ENCODE measurements at regions of chr6 and their contacts with region 1.

Region 1: GRCh38 chr6:151323791-151324487 is 67.4 kb downstream of the ZBTB2 start:
- DNase-seq: peak; percentile 80
- H3K4me3 Mint-ChIP-seq: no peak overlapping the region
- H3K27ac Mint-ChIP-seq: no peak overlapping the region
- H3K4me1 Mint-ChIP-seq: peaks cover 26% of the 10 kb centered on the region
- H3K27me3 Mint-ChIP-seq: peaks cover 72% of the 10 kb centered on the region

Region 2: DNA sequence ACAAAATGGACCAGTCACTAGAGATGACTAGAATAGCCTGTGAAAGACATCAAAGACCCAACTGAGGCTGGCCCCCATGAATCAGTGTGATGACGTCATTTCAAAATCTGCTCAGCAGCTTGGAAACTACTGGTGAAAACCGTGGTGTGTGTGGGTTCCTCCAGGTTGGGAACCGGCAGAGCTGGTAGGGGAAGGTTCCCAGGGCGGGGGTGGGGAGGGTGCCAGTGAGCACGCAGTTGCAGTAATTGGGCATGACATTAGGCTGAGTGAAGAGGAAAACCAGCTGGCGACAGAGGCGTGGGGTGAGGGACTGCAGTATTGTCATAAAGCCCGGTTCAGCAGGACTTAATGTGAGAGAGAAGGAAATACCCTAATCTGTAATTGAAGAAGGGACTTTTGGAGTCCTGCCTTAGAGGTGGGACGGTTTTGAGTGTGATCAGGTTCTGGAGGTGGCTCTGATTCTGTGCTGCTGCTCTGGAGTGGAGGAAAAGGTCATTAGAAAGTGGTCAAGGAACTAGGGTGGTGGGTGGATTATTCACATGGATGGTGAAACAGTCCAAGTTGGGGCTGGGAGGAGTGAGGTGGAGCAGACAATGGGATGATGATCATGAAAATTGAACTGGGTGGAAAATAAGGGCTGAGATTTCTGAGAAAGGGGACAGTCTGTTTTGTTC is 510.5 kb before region 1 on chr6:
- CTCF ChIA-PET with region 1: interaction called, 19 read pairs
- DNase-seq: no peak
- H3K4me3 Mint-ChIP-seq: no peak overlapping the region
- H3K27ac Mint-ChIP-seq: no peak overlapping the region
- H3K4me1 Mint-ChIP-seq: no peaks in the 10 kb centered on the region
- H3K27me3 Mint-ChIP-seq: peaks cover 23% of the 10 kb centered on the region

Region 3: DNA sequence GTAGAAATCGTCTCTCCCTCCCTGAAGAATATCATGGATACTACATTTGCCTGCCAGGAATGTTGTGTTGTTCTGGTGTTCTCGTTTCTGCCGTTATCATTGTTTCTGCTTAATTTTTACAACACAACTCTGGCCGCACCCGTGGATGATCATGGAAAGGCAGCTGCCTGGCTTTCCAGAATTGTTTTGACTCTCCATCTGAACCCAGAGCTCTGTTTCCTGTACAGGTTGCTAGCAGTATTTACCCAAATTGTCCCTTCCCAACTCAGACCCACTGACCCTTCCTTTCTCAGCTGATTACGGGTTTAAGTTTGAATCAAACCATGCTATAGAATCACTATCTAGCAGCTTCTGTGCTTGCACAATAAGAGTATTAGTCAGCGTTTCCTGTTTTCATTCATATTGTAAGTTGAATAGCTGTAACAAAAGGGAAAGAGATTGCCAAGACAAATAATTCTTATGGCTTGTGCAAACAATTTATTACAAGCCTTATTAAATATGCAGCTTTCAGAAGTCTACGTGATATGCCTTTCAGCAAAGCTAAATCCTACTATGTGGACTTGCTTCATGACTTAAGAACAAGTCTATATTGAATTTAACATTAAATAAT is 319.4 kb before region 1 on chr6:
- CTCF ChIA-PET with region 1: interaction called, 17 read pairs
- DNase-seq: no peak
- H3K4me3 Mint-ChIP-seq: no peak overlapping the region
- H3K27ac Mint-ChIP-seq: peak overlapping the region; percentile 62
- H3K4me1 Mint-ChIP-seq: peaks cover 12% of the 10 kb centered on the region
- H3K27me3 Mint-ChIP-seq: no peaks in the 10 kb centered on the region

Region 4: GRCh38 chr6:151290877-151291721 is 32.8 kb before region 1 on chr6:
- CTCF ChIA-PET with region 1: interaction called, 17 read pairs
- DNase-seq: no peak
- H3K4me3 Mint-ChIP-seq: no peak overlapping the region
- H3K27ac Mint-ChIP-seq: no peak overlapping the region
- H3K4me1 Mint-ChIP-seq: peaks cover 29% of the 10 kb centered on the region
- H3K27me3 Mint-ChIP-seq: peaks cover 89% of the 10 kb centered on the region

Region 5: DNA sequence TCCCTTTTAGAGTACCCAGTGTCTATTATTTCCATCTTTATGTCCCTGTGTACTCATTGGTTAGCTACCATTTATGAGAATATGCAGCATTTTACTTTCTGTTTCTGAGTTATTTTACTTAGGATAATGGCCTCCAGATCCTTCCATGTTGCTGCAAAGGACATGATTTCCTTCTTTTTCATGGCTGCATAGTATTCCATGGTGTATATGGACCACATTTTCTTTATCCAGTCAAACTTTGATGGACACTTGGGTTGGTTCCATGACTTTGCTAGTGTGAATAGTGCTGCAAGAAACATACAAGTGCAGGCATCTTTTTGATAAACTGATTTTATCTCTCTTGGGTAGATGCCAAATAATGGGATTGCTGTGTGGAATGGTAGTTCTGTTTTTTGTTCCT is 12.0 kb after region 1 on chr6:
- CTCF ChIA-PET with region 1: interaction called, 45 read pairs
- DNase-seq: no peak
- H3K4me3 Mint-ChIP-seq: no peak overlapping the region
- H3K27ac Mint-ChIP-seq: no peak overlapping the region
- H3K4me1 Mint-ChIP-seq: peaks cover 3% of the 10 kb centered on the region
- H3K27me3 Mint-ChIP-seq: peaks cover 13% of the 10 kb centered on the region